Tibial artery (tissue), 4 donors: ENCODE measurements at regions of chr7 and their contacts with region 1.

Region 1: GRCh38 chr7:112495810-112496462 is 15.1 kb downstream of the LSMEM1 start:
- DNase-seq: peak in 1 of 2 donors; percentile 66
- H3K4me3 ChIP-seq: no peak overlapping the region
- H3K27ac ChIP-seq: no peak overlapping the region
- H3K4me1 ChIP-seq: peaks cover 0 to 4% (median 0%) of the 10 kb centered on the region in 4 donors
- H3K27me3 ChIP-seq: no peaks in the 10 kb centered on the region
- CTCF ChIP-seq: peak; percentile 71 to 74

Region 2: DNA sequence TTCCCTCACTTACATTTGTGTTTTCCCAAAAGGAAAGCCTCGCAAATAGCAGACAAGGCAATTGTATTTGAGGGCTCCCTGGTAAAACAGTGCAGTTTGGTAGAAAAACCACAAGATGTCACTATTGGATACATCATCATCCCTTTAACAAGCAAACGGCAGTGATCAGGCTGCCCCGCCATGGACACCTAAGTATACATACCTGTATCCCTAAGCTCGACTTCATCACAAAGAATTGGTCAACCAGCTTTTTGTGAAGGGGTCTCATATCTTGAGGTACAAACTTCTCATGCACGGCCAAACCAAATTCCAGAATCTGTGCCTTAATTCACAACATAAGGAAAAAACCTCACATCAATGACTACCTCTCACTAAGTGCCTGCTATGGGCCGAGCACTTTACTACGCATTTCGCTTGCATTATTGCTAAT is 754.1 kb before region 1 on chr7:
- intact Hi-C with region 1: loop called (anchors 2 kb)
- DNase-seq: peak in 1 of 2 donors; percentile 49
- H3K4me3 ChIP-seq: no peak overlapping the region
- H3K27ac ChIP-seq: no peak overlapping the region
- H3K4me1 ChIP-seq: no peaks in the 10 kb centered on the region
- H3K27me3 ChIP-seq: no peaks in the 10 kb centered on the region
- CTCF ChIP-seq: peak; percentile 59 to 64

Region 3: GRCh38 chr7:112286250-112287086 is 209.5 kb before region 1 on chr7:
- intact Hi-C with region 1: no loop called
- DNase-seq: no peak
- H3K4me3 ChIP-seq: no peak overlapping the region
- H3K27ac ChIP-seq: no peak overlapping the region
- H3K4me1 ChIP-seq: no peaks in the 10 kb centered on the region
- H3K27me3 ChIP-seq: no peaks in the 10 kb centered on the region
- CTCF ChIP-seq: no peak

Region 4: DNA sequence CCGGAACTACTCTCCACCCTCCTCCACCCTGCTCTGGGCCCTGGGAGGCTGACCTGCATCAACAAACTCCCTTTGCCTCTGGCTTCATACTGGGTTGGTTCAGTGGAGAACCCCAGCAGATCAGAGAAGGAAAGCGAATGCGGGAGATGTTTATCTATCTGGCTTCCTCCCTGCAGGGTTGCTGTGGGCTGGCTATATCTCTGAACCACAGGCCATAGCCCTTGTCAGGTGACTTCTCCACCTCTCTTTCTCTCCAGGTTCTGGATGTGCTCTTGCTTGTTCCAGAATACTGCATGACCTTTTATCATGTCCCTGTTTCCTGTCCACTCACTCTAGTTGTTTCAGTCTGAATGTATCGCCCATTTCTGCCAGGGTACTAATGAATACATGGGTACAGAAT is 97.4 kb before region 1 on chr7:
- intact Hi-C with region 1: loop called (anchors 10 kb)
- DNase-seq: no peak
- H3K4me3 ChIP-seq: no peak overlapping the region
- H3K27ac ChIP-seq: no peak overlapping the region
- H3K4me1 ChIP-seq: no peaks in the 10 kb centered on the region
- H3K27me3 ChIP-seq: no peaks in the 10 kb centered on the region
- CTCF ChIP-seq: no peak

Region 5: GRCh38 chr7:112566442-112567324 is 70.7 kb after region 1 on chr7:
- intact Hi-C with region 1: no loop called
- DNase-seq: no peak
- H3K4me3 ChIP-seq: peak overlapping the region in 1 of 2 donors; percentile 10
- H3K27ac ChIP-seq: no peak overlapping the region
- H3K4me1 ChIP-seq: peaks cover 0 to 4% (median 0%) of the 10 kb centered on the region in 4 donors
- H3K27me3 ChIP-seq: no peaks in the 10 kb centered on the region
- CTCF ChIP-seq: no peak